Vagina (tissue), 2 donors: ENCODE measurements at regions of chr1 and their contacts with region 1.

Region 1: DNA sequence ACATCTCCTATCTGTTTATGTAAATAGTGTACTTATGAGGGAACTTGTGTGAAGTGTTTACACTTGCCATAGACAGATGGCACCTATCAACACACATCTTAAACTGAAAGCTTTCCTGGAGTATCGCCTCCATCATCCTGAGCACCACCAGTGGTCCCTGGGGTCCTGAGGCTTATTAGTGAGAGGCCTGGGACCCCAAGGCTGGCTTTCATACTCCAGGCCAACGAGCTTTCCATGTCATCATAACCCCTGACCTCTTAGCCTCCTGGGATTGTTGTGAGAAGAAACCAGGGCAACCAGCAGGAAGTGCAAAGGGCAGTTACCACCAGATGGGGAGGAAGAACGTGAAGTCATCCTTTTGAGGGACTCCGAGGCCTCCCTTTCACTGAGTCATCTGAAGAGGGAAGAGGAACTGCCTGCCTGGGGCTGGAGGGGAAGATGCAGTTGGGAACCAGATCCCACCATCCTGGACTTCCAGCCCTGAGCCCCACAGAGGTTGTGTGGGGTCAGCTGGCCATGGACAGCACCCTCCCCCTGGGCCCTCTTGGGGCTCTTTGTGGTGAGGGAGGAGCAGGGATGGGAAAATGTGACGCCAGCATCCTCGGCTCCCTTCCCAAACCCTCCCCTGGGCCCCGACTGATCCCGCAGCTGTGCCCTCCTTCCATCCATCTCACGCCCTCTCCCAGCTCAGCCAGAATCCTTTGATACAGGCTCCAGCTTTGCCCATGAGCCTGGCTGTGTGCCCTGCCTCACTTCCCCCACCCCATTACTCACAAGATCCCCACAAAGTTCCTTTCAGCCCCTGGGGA is 5.8 kb downstream of the INKA2 start:
- DNase-seq: peak; percentile 82 to 90
- H3K4me3 ChIP-seq: no peak overlapping the region
- H3K27ac ChIP-seq: peak overlapping the region; percentile 44
- H3K4me1 ChIP-seq: peaks cover 64% of the 10 kb centered on the region
- H3K27me3 ChIP-seq: no peaks in the 10 kb centered on the region
- CTCF ChIP-seq: no peak
- POLR2A ChIP-seq: no peak

Region 2: DNA sequence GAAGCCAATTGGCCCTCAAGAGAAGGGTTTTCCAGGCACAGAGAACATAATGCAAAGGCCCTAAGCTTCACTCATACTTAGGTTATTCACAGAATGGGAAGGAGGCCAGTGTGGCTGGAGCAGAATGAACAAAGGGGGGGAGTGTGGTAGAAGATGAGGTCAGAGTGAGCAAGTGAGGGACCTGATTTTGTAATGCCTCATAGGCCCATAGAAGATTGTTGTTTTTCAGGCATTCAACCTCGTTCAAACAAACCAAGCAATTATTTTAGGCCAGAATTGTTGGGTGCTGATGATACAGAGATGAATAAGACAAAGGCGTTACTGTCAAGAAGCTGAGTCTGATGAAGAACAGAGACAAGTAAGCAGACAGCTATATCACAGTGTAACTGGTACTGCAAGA is 168.3 kb before region 1 on chr1:
- intact Hi-C with region 1: no loop called
- DNase-seq: no peak
- H3K4me3 ChIP-seq: no peak overlapping the region
- H3K27ac ChIP-seq: no peak overlapping the region
- H3K4me1 ChIP-seq: no peaks in the 10 kb centered on the region
- H3K27me3 ChIP-seq: no peaks in the 10 kb centered on the region
- CTCF ChIP-seq: no peak
- POLR2A ChIP-seq: no peak

Region 3: DNA sequence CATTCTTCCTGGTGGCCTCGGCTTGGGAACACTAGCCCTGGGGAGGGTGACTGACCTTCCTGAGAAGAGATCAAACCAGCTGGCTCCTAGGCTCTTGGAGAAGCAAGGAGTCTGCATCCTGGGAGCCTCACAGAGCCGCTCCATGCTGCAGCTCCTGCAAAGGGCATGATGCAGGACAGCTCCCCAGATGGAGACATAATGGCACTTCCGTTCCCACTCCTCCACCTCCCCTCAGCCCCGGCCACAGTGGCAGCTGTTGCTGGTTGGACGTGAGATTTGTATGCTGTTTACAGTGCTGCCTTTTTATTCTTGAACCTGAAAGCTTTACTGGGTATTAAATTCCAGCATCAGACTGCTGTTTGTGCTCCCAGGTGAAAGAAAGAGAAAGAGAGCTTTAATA is 578.9 kb after region 1 on chr1:
- intact Hi-C with region 1: loop called (anchors 5 kb)
- DNase-seq: no peak
- H3K4me3 ChIP-seq: no peak overlapping the region
- H3K27ac ChIP-seq: no peak overlapping the region
- H3K4me1 ChIP-seq: peaks cover 10% of the 10 kb centered on the region
- H3K27me3 ChIP-seq: no peaks in the 10 kb centered on the region
- CTCF ChIP-seq: no peak
- POLR2A ChIP-seq: no peak